ENCODE measurements at regions of chr9 and their contacts with region 1.

Region 1: DNA sequence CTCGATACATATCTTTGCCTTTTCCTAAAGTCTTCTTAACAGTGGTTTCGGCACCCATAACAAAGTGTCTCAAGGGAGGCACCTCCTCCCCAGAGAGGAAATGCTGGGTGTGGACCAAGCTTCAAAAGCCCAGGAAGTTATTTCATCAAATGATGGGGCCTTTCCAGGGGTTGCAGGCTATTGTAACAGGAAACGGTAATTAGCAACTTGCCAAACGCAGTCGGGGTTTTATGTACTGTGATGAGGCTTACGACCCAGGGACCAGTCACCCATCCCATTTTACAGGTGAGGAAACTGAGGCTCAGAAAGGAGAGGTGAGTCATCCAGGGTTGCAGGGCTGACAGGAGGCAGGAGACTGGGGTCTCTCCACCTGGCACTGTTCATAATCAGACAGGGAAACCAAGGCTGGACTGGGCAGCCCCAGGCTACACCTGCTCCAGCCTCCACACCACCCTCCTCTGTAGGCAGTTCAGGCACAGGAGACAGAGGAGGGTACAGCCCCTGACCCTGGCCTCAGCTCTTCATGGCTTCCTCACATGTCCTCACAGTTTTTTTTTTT is 30.0 kb upstream of the SUSD3 start:
- DNase-seq: peak; percentile 90
- H3K4me3 ChIP-seq: peak overlapping the region; percentile 35
- H3K27ac ChIP-seq: peak overlapping the region; percentile 59
- H3K4me1 ChIP-seq: peaks cover 26% of the 10 kb centered on the region
- CTCF ChIP-seq: no peak

Region 2: GRCh38 chr9:93058355-93059096 is 30.0 kb after region 1 on chr9 and contains the start of gene SUSD3:
- CTCF ChIA-PET with region 1: interaction called, 6 read pairs
- POLR2A ChIA-PET with region 1: interaction called, 6 read pairs
- intact Hi-C with region 1: loop called (anchors 1 kb)
- DNase-seq: peak; percentile 97
- H3K4me3 ChIP-seq: peak within 1 kb of the TSS; percentile 79
- H3K27ac ChIP-seq: peak within 1 kb of the TSS; percentile 95
- H3K4me1 ChIP-seq: peaks cover 76% of the 10 kb centered on the region
- CTCF ChIP-seq: no peak
- total RNA-seq, gene SUSD3: 160 and 201 TPM in 2 replicates

Measured in OCI-LY7 (cell line).